CD4-positive, alpha-beta T cell (primary cell): ENCODE measurements at regions of chr1 and their contacts with region 1.

Region 1: GRCh38 chr1:11295905-11296304 is 22.9 kb downstream of the UBIAD1 start:
- DNase-seq: peak in 4 of 14 experiments; percentile 27 to 55 (median 40)
- ATAC-seq: peak; percentile 43
- H3K4me3 ChIP-seq: no peak overlapping the region
- H3K4me3 Mint-ChIP-seq: no peak overlapping the region
- H3K27ac ChIP-seq: no peak overlapping the region
- H3K27ac Mint-ChIP-seq: peak overlapping the region; percentile 76
- H3K4me1 ChIP-seq: peaks cover 50% of the 10 kb centered on the region
- H3K4me1 Mint-ChIP-seq: peaks cover 63% of the 10 kb centered on the region
- H3K27me3 ChIP-seq: no peaks in the 10 kb centered on the region
- H3K27me3 Mint-ChIP-seq: no peaks in the 10 kb centered on the region
- CTCF ChIP-seq: peak; percentile 56

Region 2: DNA sequence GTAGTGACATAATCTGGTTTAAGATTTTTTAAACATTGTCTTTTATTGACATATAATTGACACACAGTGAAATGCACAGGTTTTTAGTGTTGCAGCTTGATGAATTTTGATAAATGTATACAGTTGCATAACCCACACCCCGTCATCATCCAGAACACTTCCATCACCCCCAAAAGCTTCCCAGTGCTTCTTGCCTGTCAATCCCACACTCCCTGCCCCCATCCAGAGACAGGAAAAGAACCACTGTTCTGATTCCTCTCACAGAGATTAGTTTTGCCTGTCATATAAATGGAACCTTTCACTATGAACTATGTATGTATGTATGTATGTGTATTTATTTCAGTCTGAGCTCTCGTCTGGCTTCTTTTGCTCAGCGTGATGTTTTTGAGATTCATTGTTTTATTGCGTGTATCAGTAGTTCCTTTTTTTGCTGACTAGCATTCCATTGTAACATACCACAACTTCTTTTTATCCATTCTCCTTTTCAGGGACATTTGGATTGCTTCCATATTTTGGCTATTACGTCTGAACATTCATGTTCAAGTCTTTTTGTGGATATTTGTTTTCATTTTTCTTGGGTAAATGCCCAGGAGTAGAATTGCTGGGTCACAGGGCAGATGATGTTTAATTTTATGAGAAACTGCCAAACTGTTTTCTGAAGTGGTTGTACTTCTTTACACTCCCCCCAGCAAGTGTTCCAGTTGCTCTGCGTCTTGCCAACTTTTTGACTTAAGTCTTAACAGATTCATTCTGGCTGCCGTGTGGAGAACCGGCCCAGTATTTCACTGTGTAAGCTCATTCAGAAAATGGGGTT is 14.2 kb before region 1 on chr1:
- CTCF ChIA-PET with region 1: interaction called, 3 read pairs
- POLR2A ChIA-PET with region 1: interaction called, 29 read pairs
- intact Hi-C with region 1: no loop called
- DNase-seq: no peak
- ATAC-seq: no peak
- H3K4me3 ChIP-seq: no peak overlapping the region
- H3K4me3 Mint-ChIP-seq: peak overlapping the region; percentile 69
- H3K27ac ChIP-seq: peak overlapping the region; percentile 60 to 78
- H3K27ac Mint-ChIP-seq: peak overlapping the region; percentile 96
- H3K4me1 ChIP-seq: peaks cover 70% of the 10 kb centered on the region
- H3K4me1 Mint-ChIP-seq: peaks cover 89% of the 10 kb centered on the region
- H3K27me3 ChIP-seq: no peaks in the 10 kb centered on the region
- H3K27me3 Mint-ChIP-seq: no peaks in the 10 kb centered on the region
- CTCF ChIP-seq: no peak

Region 3: DNA sequence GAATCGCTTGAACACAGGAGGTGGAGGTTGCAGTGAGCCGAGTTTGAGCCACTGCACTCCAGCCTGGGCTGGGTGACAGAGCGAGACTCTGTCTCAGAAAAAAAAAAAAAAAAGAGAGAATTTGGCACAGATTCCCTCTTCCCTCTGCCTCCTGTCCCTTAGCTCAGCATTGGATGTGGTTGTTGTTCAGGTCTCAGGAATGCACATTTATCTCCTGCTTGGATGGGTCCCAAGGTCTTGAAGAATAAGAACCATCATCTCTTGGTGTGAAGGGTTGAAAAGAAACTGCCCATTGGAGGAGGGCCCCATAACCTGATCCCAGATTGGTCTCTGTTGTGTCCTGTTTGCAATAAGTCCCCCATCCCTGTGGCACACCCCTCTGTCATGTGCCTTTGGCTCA is 11.9 kb after region 1 on chr1:
- CTCF ChIA-PET with region 1: no interaction called
- POLR2A ChIA-PET with region 1: no interaction called
- intact Hi-C with region 1: no loop called
- DNase-seq: no peak
- ATAC-seq: no peak
- H3K4me3 ChIP-seq: no peak overlapping the region
- H3K4me3 Mint-ChIP-seq: no peak overlapping the region
- H3K27ac ChIP-seq: no peak overlapping the region
- H3K27ac Mint-ChIP-seq: no peak overlapping the region
- H3K4me1 ChIP-seq: peaks cover 8% of the 10 kb centered on the region
- H3K4me1 Mint-ChIP-seq: peaks cover 14% of the 10 kb centered on the region
- H3K27me3 ChIP-seq: no peaks in the 10 kb centered on the region
- H3K27me3 Mint-ChIP-seq: no peaks in the 10 kb centered on the region
- CTCF ChIP-seq: no peak

Region 4: GRCh38 chr1:11355559-11356475 is 59.9 kb after region 1 on chr1:
- CTCF ChIA-PET with region 1: no interaction called
- POLR2A ChIA-PET with region 1: no interaction called
- intact Hi-C with region 1: no loop called
- DNase-seq: no peak
- ATAC-seq: no peak
- H3K4me3 ChIP-seq: no peak overlapping the region
- H3K4me3 Mint-ChIP-seq: no peak overlapping the region
- H3K27ac ChIP-seq: no peak overlapping the region
- H3K27ac Mint-ChIP-seq: no peak overlapping the region
- H3K4me1 ChIP-seq: peaks cover 8% of the 10 kb centered on the region
- H3K4me1 Mint-ChIP-seq: peaks cover 9% of the 10 kb centered on the region
- H3K27me3 ChIP-seq: peaks cover 2 to 7% of the 10 kb centered on the region in 2 experiments
- H3K27me3 Mint-ChIP-seq: peaks cover 13% of the 10 kb centered on the region
- CTCF ChIP-seq: no peak

Region 5: DNA sequence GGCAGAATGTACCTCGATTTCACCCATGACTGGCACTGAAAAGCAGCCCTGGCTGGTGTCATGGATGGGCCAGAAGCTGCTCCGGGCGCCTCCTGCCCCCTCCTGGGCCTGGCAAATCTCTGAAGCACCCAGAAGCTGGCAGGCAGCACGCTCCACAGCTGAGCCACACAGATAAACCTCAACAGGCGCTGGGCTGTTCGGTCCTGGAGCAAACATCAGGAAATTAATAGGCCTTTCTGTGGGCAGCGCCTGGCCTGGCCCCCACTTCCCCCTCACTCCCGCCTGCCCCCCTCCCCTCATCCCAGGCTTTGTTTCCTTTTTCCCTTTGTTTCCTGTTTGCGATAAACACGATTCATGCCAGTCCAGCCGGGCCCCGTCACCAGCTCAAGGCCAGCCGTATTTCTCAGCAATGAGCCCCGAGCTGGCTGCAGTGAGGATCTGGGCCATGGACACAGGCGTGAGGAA is 162.9 kb after region 1 on chr1:
- CTCF ChIA-PET with region 1: no interaction called
- POLR2A ChIA-PET with region 1: no interaction called
- intact Hi-C with region 1: no loop called
- DNase-seq: no peak
- ATAC-seq: no peak
- H3K4me3 ChIP-seq: no peak overlapping the region
- H3K4me3 Mint-ChIP-seq: no peak overlapping the region
- H3K27ac ChIP-seq: no peak overlapping the region
- H3K27ac Mint-ChIP-seq: no peak overlapping the region
- H3K4me1 ChIP-seq: peaks cover 22% of the 10 kb centered on the region
- H3K4me1 Mint-ChIP-seq: peaks cover 31% of the 10 kb centered on the region
- H3K27me3 ChIP-seq: peaks cover 0 to 2% of the 10 kb centered on the region in 2 experiments
- H3K27me3 Mint-ChIP-seq: peaks cover 9% of the 10 kb centered on the region
- CTCF ChIP-seq: no peak